ENCODE measurements at regions of chr2 and their contacts with region 1.

Region 1: DNA sequence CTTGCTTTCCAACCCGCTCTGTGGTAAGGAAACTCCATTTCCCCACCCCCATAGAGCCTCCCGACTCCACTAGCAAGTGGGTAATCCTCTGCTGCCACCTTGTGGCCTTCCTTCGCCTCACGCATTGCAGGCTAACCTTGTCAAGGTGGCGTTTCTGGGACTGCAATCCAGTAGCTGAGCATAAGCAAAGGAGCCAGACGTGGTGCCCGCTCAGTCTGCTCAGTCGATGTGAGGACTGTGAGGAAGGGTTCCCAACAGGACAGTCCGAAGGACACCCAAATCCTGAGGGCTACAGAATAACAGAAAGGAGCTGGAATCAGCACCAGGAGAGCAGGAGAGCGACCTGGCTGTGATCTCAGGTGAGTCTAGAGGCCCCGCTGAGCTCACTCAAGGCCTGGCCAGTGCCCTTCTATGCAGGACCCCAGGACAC is 144.2 kb downstream of the SUCLG1 start:
- DNase-seq: peak; percentile 87
- H3K4me3 Mint-ChIP-seq: no peak overlapping the region
- H3K27ac Mint-ChIP-seq: no peak overlapping the region
- H3K4me1 Mint-ChIP-seq: peaks cover 6% of the 10 kb centered on the region
- H3K27me3 Mint-ChIP-seq: peaks cover 16% of the 10 kb centered on the region
- CTCF ChIP-seq: peak; percentile 92

Region 2: DNA sequence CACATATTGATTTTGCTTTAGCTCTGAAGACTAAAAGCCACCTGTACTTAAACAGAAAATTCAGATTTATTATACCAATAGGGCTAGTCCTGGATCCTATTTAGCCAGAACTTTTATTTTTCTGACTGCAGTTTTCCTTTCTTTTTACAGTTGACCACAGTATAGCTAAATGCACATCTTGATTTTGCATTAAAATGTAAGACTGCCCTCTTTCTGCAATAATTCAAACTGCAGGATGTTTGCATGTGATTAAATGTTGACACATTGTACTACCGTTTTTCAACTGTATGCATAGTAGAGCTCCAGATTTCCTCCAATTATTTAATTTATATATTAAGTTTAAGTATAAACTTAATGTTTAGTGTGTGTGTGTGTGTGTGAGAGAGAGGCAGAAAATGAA is 1118.7 kb before region 1 on chr2:
- CTCF ChIA-PET with region 1: interaction called, 5 read pairs
- POLR2A ChIA-PET with region 1: no interaction called
- intact Hi-C with region 1: loop called (anchors 10 kb)
- DNase-seq: peak; percentile 58
- H3K4me3 Mint-ChIP-seq: no peak overlapping the region
- H3K27ac Mint-ChIP-seq: no peak overlapping the region
- H3K4me1 Mint-ChIP-seq: peaks cover 7% of the 10 kb centered on the region
- H3K27me3 Mint-ChIP-seq: no peaks in the 10 kb centered on the region
- CTCF ChIP-seq: peak; percentile 65

Region 3: DNA sequence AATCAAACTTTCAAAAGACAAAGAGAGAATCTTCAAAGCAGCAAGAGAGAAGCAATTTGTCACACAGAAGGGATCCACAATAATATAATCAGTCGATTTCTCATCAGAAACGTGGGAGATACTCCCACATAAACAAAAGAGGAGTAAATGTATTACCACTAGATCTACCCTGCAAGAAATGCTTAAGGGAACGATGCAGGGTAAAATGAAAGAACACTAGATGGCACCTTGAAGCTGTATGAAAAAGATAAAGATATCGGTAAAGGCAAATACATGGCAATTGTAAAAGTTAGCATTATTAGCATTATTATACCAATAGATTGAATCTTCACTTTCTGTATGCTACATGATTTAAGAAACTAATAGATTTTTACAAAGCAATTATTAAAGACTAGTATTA is 532.8 kb before region 1 on chr2:
- CTCF ChIA-PET with region 1: interaction called, 17 read pairs
- POLR2A ChIA-PET with region 1: no interaction called
- intact Hi-C with region 1: no loop called
- DNase-seq: peak; percentile 13
- H3K4me3 Mint-ChIP-seq: no peak overlapping the region
- H3K27ac Mint-ChIP-seq: peak overlapping the region; percentile 6
- H3K4me1 Mint-ChIP-seq: no peaks in the 10 kb centered on the region
- H3K27me3 Mint-ChIP-seq: no peaks in the 10 kb centered on the region
- CTCF ChIP-seq: no peak

Region 4: DNA sequence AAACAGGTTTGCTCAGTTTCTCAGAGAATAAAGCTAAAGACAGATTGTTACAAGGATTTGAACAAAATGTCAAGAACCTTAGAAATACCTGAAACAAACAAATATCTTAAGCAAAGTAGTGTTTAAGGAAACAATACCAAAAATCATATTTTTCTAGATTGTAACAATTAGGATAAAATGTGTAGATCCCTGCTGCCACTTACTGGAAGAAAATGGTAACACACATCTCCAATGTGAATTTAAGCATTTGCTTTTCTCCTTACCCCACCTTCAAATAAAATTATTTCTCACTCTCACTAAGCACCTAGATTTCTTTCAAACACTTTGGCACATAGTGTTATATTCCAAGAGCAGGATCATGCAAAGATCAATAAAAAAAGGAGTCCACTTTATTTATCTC is 109.2 kb after region 1 on chr2:
- CTCF ChIA-PET with region 1: interaction called, 57 read pairs
- POLR2A ChIA-PET with region 1: no interaction called
- intact Hi-C with region 1: loop called (anchors 5 kb)
- DNase-seq: peak; percentile 26
- H3K4me3 Mint-ChIP-seq: no peak overlapping the region
- H3K27ac Mint-ChIP-seq: no peak overlapping the region
- H3K4me1 Mint-ChIP-seq: peaks cover 13% of the 10 kb centered on the region
- H3K27me3 Mint-ChIP-seq: no peaks in the 10 kb centered on the region
- CTCF ChIP-seq: peak; percentile 63